ENCODE measurements at regions of chr15 and their contacts with region 1.

Region 1: GRCh38 chr15:41774062-41774881 is at the start of gene MAPKBP1:
- DNase-seq: peak; percentile 99
- H3K4me3 Mint-ChIP-seq: peak within 1 kb of the TSS; percentile 92
- H3K27ac Mint-ChIP-seq: peak within 1 kb of the TSS; percentile 95
- H3K4me1 Mint-ChIP-seq: peaks cover 55% of the 10 kb centered on the region
- H3K27me3 Mint-ChIP-seq: no peaks in the 10 kb centered on the region
- total RNA-seq, gene MAPKBP1: 16.1 to 16.6 TPM

Region 2: GRCh38 chr15:41465822-41466421 is 308.4 kb before region 1 on chr15:
- CTCF ChIA-PET with region 1: interaction called, 16 read pairs
- POLR2A ChIA-PET with region 1: no interaction called
- intact Hi-C with region 1: no loop called
- DNase-seq: no peak
- H3K4me3 Mint-ChIP-seq: no peak overlapping the region
- H3K27ac Mint-ChIP-seq: no peak overlapping the region
- H3K4me1 Mint-ChIP-seq: no peaks in the 10 kb centered on the region
- H3K27me3 Mint-ChIP-seq: no peaks in the 10 kb centered on the region

Region 3: GRCh38 chr15:41490355-41490754 is 283.9 kb before region 1 on chr15:
- CTCF ChIA-PET with region 1: no interaction called
- POLR2A ChIA-PET with region 1: no interaction called
- intact Hi-C with region 1: no loop called
- DNase-seq: peak; percentile 71
- H3K4me3 Mint-ChIP-seq: peak overlapping the region; percentile 10
- H3K27ac Mint-ChIP-seq: peak overlapping the region; percentile 73
- H3K4me1 Mint-ChIP-seq: peaks cover 42% of the 10 kb centered on the region
- H3K27me3 Mint-ChIP-seq: peaks cover 14% of the 10 kb centered on the region

Region 4: DNA sequence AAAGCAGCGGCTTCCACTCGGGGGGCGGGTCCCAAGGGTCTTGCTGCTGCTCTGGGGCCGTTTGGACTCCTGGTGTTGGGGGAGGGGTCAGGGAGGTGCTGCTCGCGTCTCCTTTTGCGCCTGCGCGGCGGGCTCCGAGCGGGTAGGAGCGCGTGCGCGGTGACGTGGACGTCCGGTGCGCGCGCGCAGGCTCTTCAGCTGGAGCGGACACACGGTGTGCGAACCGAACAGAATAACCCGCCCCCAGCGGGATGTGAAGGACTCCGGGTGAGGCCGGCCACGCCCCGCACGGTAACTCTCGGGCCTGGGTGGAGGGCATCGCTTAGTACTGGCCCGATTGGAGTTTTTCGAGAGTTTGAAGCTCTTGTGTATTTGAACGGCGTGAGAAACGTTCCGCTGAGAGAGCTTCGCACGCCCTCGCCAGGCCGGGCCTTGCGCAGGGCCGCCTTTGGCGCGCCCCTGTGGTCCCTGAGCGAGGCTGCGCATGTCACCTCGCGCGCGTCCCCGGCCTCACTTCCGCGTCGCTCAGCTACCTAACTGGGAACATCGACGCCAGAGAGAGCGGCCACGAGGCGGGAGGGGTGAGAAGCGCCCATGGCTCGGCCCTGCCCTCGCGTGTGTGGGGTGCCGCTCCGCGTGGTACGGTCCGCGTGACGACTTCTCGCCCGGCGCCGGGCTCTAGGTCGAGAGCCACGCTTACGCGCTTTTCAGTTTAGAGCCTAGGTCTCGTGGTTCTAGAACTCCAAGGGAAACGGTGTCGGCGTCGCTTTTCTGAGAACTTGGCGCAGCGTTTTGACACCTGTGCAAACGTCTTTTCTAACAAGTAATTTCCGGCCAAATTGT is 113.8 kb before region 1 on chr15 and contains the start of gene MGA:
- CTCF ChIA-PET with region 1: interaction called, 16 read pairs
- POLR2A ChIA-PET with region 1: interaction called, 4 read pairs
- intact Hi-C with region 1: loop called (anchors 2 kb)
- DNase-seq: peak; percentile 92
- H3K4me3 Mint-ChIP-seq: peak within 1 kb of the TSS; percentile 86
- H3K27ac Mint-ChIP-seq: peak within 1 kb of the TSS; percentile 76
- H3K4me1 Mint-ChIP-seq: peaks cover 39% of the 10 kb centered on the region
- H3K27me3 Mint-ChIP-seq: no peaks in the 10 kb centered on the region
- total RNA-seq, gene MGA: 29.6 to 31.4 TPM

Region 5: GRCh38 chr15:41806291-41807181 is 32.3 kb after region 1 on chr15:
- CTCF ChIA-PET with region 1: interaction called, 283 read pairs
- POLR2A ChIA-PET with region 1: interaction called, 4 read pairs
- intact Hi-C with region 1: loop called (anchors 1 kb)
- DNase-seq: no peak
- H3K4me3 Mint-ChIP-seq: no peak overlapping the region
- H3K27ac Mint-ChIP-seq: no peak overlapping the region
- H3K4me1 Mint-ChIP-seq: peaks cover 6% of the 10 kb centered on the region
- H3K27me3 Mint-ChIP-seq: no peaks in the 10 kb centered on the region

Region 6: GRCh38 chr15:41904541-41905005 is 130.3 kb after region 1 on chr15:
- CTCF ChIA-PET with region 1: interaction called, 58 read pairs
- POLR2A ChIA-PET with region 1: no interaction called
- intact Hi-C with region 1: loop called (anchors 1 kb)
- DNase-seq: peak; percentile 81
- H3K4me3 Mint-ChIP-seq: no peak overlapping the region
- H3K27ac Mint-ChIP-seq: peak overlapping the region; percentile 54
- H3K4me1 Mint-ChIP-seq: peaks cover 9% of the 10 kb centered on the region
- H3K27me3 Mint-ChIP-seq: no peaks in the 10 kb centered on the region

Region 7: DNA sequence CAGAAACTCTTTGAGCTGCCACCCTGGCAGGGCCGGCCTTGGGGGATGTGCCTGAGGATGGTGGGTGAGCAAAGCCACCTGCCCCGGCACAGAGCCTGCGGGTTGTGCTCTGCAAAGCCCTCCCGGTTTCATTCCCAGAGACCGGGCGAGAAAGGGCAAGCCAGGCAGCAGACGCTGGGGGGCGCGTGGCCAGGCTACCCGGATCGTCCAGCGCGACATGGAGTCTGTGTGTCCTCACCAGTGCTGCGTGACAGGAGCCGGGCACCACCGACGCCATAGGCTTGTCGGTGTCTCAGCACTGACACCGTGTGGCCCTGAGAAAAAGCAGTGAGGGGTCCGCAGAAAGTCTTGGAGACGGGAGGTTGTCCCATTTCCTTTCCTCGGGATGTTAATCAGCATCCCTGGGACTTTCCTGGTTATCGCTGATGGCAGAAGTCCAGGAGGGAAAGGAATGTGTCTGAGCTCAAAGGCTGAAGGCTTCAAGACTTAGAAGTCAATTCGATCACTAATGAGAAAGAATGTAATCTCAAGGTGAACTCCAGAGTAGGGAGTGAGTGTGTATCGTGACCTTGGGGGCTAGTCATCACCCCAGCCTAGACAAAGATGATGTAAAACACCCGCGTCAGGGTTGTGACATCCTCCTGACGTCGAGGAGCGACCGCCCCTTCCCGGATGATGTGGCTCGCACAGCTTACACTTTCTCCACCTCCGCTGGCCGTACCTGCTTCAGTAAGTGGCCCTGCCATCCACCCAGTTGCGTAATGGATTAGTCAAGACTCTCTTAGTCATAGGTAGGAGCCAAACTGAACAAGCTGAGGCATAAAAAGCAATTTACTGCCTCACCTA is 282.9 kb after region 1 on chr15:
- CTCF ChIA-PET with region 1: interaction called, 4 read pairs
- POLR2A ChIA-PET with region 1: no interaction called
- intact Hi-C with region 1: loop called (anchors 1 kb)
- DNase-seq: peak; percentile 81
- H3K4me3 Mint-ChIP-seq: peak overlapping the region; percentile 48
- H3K27ac Mint-ChIP-seq: no peak overlapping the region
- H3K4me1 Mint-ChIP-seq: peaks cover 13% of the 10 kb centered on the region
- H3K27me3 Mint-ChIP-seq: peaks cover 24% of the 10 kb centered on the region

Region 8: GRCh38 chr15:42226648-42227047 is 452.4 kb after region 1 on chr15:
- CTCF ChIA-PET with region 1: no interaction called
- POLR2A ChIA-PET with region 1: no interaction called
- intact Hi-C with region 1: no loop called
- DNase-seq: no peak
- H3K4me3 Mint-ChIP-seq: no peak overlapping the region
- H3K27ac Mint-ChIP-seq: no peak overlapping the region
- H3K4me1 Mint-ChIP-seq: no peaks in the 10 kb centered on the region
- H3K27me3 Mint-ChIP-seq: no peaks in the 10 kb centered on the region